Mammary epithelial cell (primary cell): ENCODE measurements at regions of chr1 and their contacts with region 1.

Region 1: GRCh38 chr1:88061492-88062177 is 622.4 kb upstream of the PKN2 start:
- DNase-seq: peak; percentile 75
- H3K4me3 ChIP-seq: no peak overlapping the region
- H3K27ac ChIP-seq: peak overlapping the region; percentile 19
- H3K4me1 ChIP-seq: peaks cover 24% of the 10 kb centered on the region
- H3K27me3 ChIP-seq: no peaks in the 10 kb centered on the region
- CTCF ChIP-seq: peak; percentile 92 to 94

Region 2: GRCh38 chr1:87292684-87293493 is 768.7 kb before region 1 on chr1:
- CTCF ChIA-PET with region 1: interaction called, 4 read pairs
- dilution Hi-C with region 1: no loop called
- in situ Hi-C with region 1: no loop called
- intact Hi-C with region 1: loop called (anchors 1 kb)
- DNase-seq: peak; percentile 21
- H3K4me3 ChIP-seq: no peak overlapping the region
- H3K27ac ChIP-seq: no peak overlapping the region
- H3K4me1 ChIP-seq: no peaks in the 10 kb centered on the region
- H3K27me3 ChIP-seq: peaks cover 2% of the 10 kb centered on the region
- CTCF ChIP-seq: peak; percentile 69 to 73

Region 3: DNA sequence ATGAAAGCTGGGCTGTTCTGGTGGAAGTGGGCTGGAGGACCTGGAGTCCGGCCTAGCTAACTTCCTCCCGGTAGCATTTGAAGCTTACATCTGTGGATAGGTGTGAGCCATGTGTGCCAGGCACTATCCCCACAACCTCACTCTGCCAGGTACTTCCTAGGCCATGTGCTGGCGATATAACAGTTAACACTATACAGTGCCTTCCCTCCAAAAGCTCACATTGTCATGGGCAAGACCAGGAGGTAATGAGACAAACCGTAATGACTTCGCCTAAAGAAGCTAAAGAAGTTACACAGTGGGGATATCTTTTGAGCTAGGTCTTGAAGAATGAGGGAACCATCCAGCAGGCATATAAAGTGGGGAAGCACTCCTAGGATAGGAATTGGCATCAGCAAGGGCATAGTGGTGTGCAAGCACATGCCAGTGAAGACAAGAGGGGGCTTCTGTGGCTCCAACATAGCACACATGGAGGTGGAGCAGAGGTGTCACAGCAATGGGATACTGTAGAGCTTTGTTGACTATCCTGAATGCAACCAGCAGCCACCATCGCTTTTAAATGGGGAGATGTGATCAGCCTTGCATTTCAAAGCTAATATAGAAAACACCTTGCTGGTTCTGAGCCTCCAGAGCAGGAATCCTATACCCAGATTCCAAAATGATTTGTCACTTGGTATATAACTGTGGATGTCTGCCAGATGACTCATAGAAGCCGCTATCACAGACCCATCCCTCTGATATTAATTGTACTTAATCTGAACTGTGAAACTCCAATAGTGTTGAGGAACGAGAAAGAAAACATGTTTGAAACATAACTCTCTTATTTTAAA is 266.6 kb before region 1 on chr1:
- CTCF ChIA-PET with region 1: no interaction called
- dilution Hi-C with region 1: no loop called
- in situ Hi-C with region 1: no loop called
- intact Hi-C with region 1: loop called (anchors 10 kb)
- DNase-seq: peak; percentile 64
- H3K4me3 ChIP-seq: no peak overlapping the region
- H3K27ac ChIP-seq: no peak overlapping the region
- H3K4me1 ChIP-seq: peaks cover 13% of the 10 kb centered on the region
- H3K27me3 ChIP-seq: no peaks in the 10 kb centered on the region
- CTCF ChIP-seq: no peak

Region 4: GRCh38 chr1:87986130-87986866 is 75.3 kb before region 1 on chr1:
- CTCF ChIA-PET with region 1: interaction called, 12 read pairs
- dilution Hi-C with region 1: no loop called
- in situ Hi-C with region 1: no loop called
- intact Hi-C with region 1: loop called (anchors 1 kb)
- DNase-seq: no peak
- H3K4me3 ChIP-seq: no peak overlapping the region
- H3K27ac ChIP-seq: no peak overlapping the region
- H3K4me1 ChIP-seq: no peaks in the 10 kb centered on the region
- H3K27me3 ChIP-seq: no peaks in the 10 kb centered on the region
- CTCF ChIP-seq: peak in 1 of 2 donors; percentile 43

Region 5: GRCh38 chr1:88175120-88175630 is 113.5 kb after region 1 on chr1:
- CTCF ChIA-PET with region 1: no interaction called
- dilution Hi-C with region 1: no loop called
- in situ Hi-C with region 1: no loop called
- intact Hi-C with region 1: no loop called
- DNase-seq: no peak
- H3K4me3 ChIP-seq: no peak overlapping the region
- H3K27ac ChIP-seq: no peak overlapping the region
- H3K4me1 ChIP-seq: no peaks in the 10 kb centered on the region
- H3K27me3 ChIP-seq: peaks cover 4% of the 10 kb centered on the region
- CTCF ChIP-seq: no peak